ENCODE measurements at regions of chr9 and their contacts with region 1.

Region 1: GRCh38 chr9:121222524-121223171 is 21.0 kb upstream of the RAB14 start:
- DNase-seq: no peak
- H3K4me3 ChIP-seq: no peak overlapping the region
- CTCF ChIP-seq: no peak
- POLR2A ChIP-seq: no peak

Region 2: GRCh38 chr9:121259935-121260334 is 37.3 kb after region 1 on chr9:
- intact Hi-C with region 1: loop called (anchors 5 kb)
- DNase-seq: peak in 1 of 2 donors; percentile 31
- H3K4me3 ChIP-seq: no peak overlapping the region
- CTCF ChIP-seq: no peak
- POLR2A ChIP-seq: no peak